Dorsolateral prefrontal cortex (tissue), 120 donors: ENCODE measurements at regions of chr14 and their contacts with region 1.

Region 1: GRCh38 chr14:59897761-59898383 is 22.1 kb upstream of the LRRC9 start:
- DNase-seq: peak in 4 of 10 donors; percentile 30 to 56 (median 38)
- H3K4me3 ChIP-seq: no peak overlapping the region
- H3K27ac ChIP-seq: no peak overlapping the region
- H3K27me3 ChIP-seq: no peaks in the 10 kb centered on the region
- CTCF ChIP-seq: peak; percentile 22 to 81 (median 66)

Region 2: GRCh38 chr14:59507063-59507780 is 390.6 kb before region 1 on chr14:
- intact Hi-C with region 1: loop called in 1 of 2 experiments (anchors 10 kb)
- DNase-seq: peak in 7 of 10 donors; percentile 22 to 63 (median 46)
- H3K4me3 ChIP-seq: no peak overlapping the region
- H3K27ac ChIP-seq: no peak overlapping the region
- H3K27me3 ChIP-seq: no peaks in the 10 kb centered on the region
- CTCF ChIP-seq: peak in 55 of 56 donors; percentile 40 to 78 (median 69)

Region 3: GRCh38 chr14:59543873-59544272 is 354.0 kb before region 1 on chr14:
- intact Hi-C with region 1: no loop called
- DNase-seq: no peak
- H3K4me3 ChIP-seq: no peak overlapping the region
- H3K27ac ChIP-seq: no peak overlapping the region
- H3K27me3 ChIP-seq: no peaks in the 10 kb centered on the region
- CTCF ChIP-seq: no peak

Region 4: DNA sequence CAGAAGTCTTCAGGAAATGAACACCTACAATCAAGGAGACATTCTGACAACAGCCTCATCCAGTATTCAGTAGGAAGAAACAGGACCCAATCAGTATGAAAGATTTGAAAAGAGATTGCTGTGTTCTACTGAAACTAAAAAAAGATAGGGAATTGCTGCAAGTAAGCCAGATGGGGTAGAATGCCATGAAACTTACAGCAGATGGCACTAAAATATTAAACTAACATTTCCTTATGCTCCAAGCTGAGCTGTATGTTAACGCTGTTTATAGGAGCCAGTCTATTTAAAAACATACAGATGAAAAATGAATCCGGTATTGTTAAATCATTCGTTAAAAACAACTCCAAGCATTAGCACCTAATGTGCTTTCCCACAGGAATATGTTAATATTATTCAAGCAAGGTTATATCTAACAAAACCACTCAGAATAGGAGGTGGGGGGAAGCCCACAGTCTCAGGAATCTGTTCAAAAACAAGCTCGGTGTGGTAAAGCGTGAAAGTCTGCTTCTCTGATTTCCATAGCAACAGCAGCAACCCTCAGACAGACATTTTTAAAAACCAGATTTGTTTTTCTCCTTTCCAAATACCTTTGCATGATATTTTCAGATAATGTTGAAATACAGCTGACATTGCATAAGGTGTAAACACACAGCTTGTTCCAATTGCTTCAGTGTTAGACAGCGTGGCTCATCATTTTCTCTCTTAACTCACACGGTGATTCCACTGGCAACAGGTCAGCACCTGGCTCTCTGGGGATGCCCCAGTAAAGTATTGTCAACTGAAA is 189.9 kb before region 1 on chr14:
- intact Hi-C with region 1: loop called in 1 of 2 experiments (anchors 10 kb)
- DNase-seq: peak in 2 of 10 donors; percentile 30 to 39
- H3K4me3 ChIP-seq: peak overlapping the region in 36 of 59 donors; percentile 0 to 46 (median 24)
- H3K27ac ChIP-seq: peak overlapping the region in 53 of 59 donors; percentile 4 to 87 (median 68)
- H3K27me3 ChIP-seq: no peaks in the 10 kb centered on the region
- CTCF ChIP-seq: peak in 54 of 56 donors; percentile 9 to 60 (median 43)

Region 5: GRCh38 chr14:59983048-59983447 is 85.2 kb after region 1 on chr14:
- intact Hi-C with region 1: no loop called
- DNase-seq: no peak
- H3K4me3 ChIP-seq: no peak overlapping the region
- H3K27ac ChIP-seq: no peak overlapping the region
- H3K27me3 ChIP-seq: no peaks in the 10 kb centered on the region
- CTCF ChIP-seq: no peak

Region 6: GRCh38 chr14:60035177-60035576 is 137.3 kb after region 1 on chr14:
- intact Hi-C with region 1: no loop called
- DNase-seq: no peak
- H3K4me3 ChIP-seq: no peak overlapping the region
- H3K27ac ChIP-seq: no peak overlapping the region
- H3K27me3 ChIP-seq: no peaks in the 10 kb centered on the region
- CTCF ChIP-seq: no peak